Pancreas (tissue), 10 donors: ENCODE measurements at regions of chr15 and their contacts with region 1.

Region 1: GRCh38 chr15:98272625-98273024 is 312.1 kb downstream of the ARRDC4 start:
- DNase-seq: no peak
- ATAC-seq: no peak
- H3K4me3 ChIP-seq: no peak overlapping the region
- H3K27ac ChIP-seq: no peak overlapping the region
- H3K4me1 ChIP-seq: no peaks in the 10 kb centered on the region
- H3K27me3 ChIP-seq: no peaks in the 10 kb centered on the region
- CTCF ChIP-seq: no peak

Region 2: GRCh38 chr15:97866959-97867358 is 405.7 kb before region 1 on chr15:
- intact Hi-C with region 1: loop called in 1 of 3 experiments (anchors 10 kb)
- DNase-seq: no peak
- ATAC-seq: no peak
- H3K4me3 ChIP-seq: no peak overlapping the region
- H3K27ac ChIP-seq: no peak overlapping the region
- H3K4me1 ChIP-seq: no peaks in the 10 kb centered on the region
- H3K27me3 ChIP-seq: no peaks in the 10 kb centered on the region
- CTCF ChIP-seq: no peak